GM12878 (cell line): ENCODE measurements at regions of chr10 and their contacts with region 1.

Region 1: GRCh38 chr10:17599089-17599488 is 18.1 kb downstream of the HACD1 start:
- DNase-seq: no peak
- ATAC-seq: peak; percentile 71
- H3K4me3 ChIP-seq: no peak overlapping the region
- H3K27ac ChIP-seq: no peak overlapping the region
- H3K4me1 ChIP-seq: no peaks in the 10 kb centered on the region
- H3K27me3 ChIP-seq: no peaks in the 10 kb centered on the region
- CTCF ChIP-seq: peak; percentile 38 to 48 (median 38); a peak in 4 of 6 replicates
- EP300 ChIP-seq: no peak
- POLR2A ChIP-seq: no peak
- RAD21 ChIP-seq: peak; percentile 58

Region 2: DNA sequence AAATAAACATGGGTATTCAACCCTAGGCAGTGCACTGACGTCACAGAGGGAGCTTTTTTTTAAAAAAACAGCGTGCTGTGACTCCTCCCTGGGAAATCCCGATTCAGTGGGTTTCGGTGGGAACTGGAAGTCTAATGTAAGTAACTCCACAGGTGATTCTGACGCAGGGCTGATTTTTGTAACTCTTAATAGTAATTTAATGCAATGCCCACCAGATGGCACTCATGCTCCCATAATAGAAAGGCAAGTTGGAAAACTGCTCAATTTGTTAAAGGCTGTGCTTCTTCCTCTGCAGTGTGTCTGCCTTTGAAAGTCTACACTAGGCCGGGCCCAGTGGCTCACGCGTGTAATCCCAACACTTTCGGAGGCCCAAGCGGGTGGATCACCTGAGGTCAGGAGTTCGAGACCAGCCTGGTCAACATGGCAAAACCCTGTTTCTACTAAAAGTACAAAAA is 770.9 kb before region 1 on chr10:
- CTCF ChIA-PET with region 1: no interaction called
- POLR2A ChIA-PET with region 1: no interaction called
- RAD21 ChIA-PET with region 1: no interaction called
- SMC1A ChIA-PET with region 1: no interaction called
- in situ Hi-C with region 1: no loop called
- intact Hi-C with region 1: loop called (anchors 10 kb)
- DNase-seq: peak; percentile 48
- ATAC-seq: peak; percentile 90
- H3K4me3 ChIP-seq: no peak overlapping the region
- H3K27ac ChIP-seq: no peak overlapping the region
- H3K4me1 ChIP-seq: no peaks in the 10 kb centered on the region
- H3K27me3 ChIP-seq: no peaks in the 10 kb centered on the region
- CTCF ChIP-seq: peak; percentile 50 to 60 (median 51); a peak in 5 of 6 replicates
- EP300 ChIP-seq: no peak
- POLR2A ChIP-seq: no peak
- RAD21 ChIP-seq: peak; percentile 67

Region 3: DNA sequence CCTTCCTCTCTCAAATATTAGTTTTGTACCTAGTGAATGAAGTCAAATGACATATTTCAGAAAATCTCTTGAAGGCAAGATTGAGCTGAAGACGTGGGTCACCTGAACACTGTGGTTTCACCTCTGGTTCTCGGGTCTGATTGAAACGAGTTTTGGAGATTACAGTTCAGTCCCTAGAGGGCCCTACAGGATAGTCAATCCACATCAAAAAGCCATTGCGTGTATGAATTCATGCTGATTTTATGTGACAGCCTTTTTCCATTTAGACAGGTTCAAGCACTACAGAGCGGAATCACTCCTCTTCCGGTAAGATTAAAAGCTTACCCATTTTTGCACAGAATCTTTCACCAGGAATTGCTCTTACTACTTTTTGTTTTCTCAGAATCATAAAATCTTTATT is 308.9 kb before region 1 on chr10:
- CTCF ChIA-PET with region 1: no interaction called
- POLR2A ChIA-PET with region 1: no interaction called
- RAD21 ChIA-PET with region 1: no interaction called
- SMC1A ChIA-PET with region 1: no interaction called
- in situ Hi-C with region 1: no loop called
- intact Hi-C with region 1: loop called (anchors 10 kb)
- DNase-seq: no peak
- ATAC-seq: peak; percentile 31; the same call in 1 of the 3 replicates
- H3K4me3 ChIP-seq: no peak overlapping the region
- H3K27ac ChIP-seq: no peak overlapping the region
- H3K4me1 ChIP-seq: no peaks in the 10 kb centered on the region
- H3K27me3 ChIP-seq: no peaks in the 10 kb centered on the region
- CTCF ChIP-seq: peak in 1 of 3 experiments; percentile 30; a peak in 2 of 6 replicates
- EP300 ChIP-seq: no peak
- POLR2A ChIP-seq: no peak
- RAD21 ChIP-seq: peak; percentile 35

Region 4: DNA sequence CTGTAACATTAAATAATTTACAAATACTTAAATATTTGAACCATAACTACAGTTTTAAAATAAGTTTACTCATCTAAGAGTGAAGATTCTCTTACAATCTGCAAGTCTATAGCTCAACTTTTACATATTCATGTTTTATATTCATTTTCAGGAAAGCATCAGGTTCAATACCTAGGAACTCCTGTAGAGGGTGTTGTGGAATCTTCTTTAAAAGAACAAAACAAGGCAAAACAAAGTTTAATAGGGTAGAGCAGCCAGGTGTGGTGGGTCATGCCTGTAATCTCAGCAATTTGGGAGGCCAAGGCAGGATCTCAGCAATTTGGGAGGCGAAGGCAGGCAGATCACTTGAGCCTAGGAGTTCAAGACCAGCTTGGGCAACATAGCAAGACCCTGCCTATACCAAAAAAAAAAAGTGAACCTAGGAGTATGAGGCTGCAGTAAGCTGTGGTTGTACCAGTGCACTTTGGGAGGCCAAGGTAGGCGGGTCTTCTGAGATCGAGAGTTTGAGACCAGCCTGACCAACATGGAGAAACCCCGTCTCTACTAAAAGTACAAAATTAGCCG is 189.8 kb before region 1 on chr10:
- CTCF ChIA-PET with region 1: interaction called, 56 read pairs
- POLR2A ChIA-PET with region 1: no interaction called
- RAD21 ChIA-PET with region 1: interaction called, 13 read pairs
- SMC1A ChIA-PET with region 1: interaction called, 8 read pairs
- in situ Hi-C with region 1: no loop called
- intact Hi-C with region 1: loop called (anchors 1 kb)
- DNase-seq: no peak
- ATAC-seq: peak; percentile 54; the same call in 2 of the 3 replicates
- H3K4me3 ChIP-seq: no peak overlapping the region
- H3K27ac ChIP-seq: no peak overlapping the region
- H3K4me1 ChIP-seq: no peaks in the 10 kb centered on the region
- H3K27me3 ChIP-seq: no peaks in the 10 kb centered on the region
- CTCF ChIP-seq: peak; percentile 40 to 50 (median 50)
- EP300 ChIP-seq: no peak
- POLR2A ChIP-seq: no peak
- RAD21 ChIP-seq: peak; percentile 47

Region 5: DNA sequence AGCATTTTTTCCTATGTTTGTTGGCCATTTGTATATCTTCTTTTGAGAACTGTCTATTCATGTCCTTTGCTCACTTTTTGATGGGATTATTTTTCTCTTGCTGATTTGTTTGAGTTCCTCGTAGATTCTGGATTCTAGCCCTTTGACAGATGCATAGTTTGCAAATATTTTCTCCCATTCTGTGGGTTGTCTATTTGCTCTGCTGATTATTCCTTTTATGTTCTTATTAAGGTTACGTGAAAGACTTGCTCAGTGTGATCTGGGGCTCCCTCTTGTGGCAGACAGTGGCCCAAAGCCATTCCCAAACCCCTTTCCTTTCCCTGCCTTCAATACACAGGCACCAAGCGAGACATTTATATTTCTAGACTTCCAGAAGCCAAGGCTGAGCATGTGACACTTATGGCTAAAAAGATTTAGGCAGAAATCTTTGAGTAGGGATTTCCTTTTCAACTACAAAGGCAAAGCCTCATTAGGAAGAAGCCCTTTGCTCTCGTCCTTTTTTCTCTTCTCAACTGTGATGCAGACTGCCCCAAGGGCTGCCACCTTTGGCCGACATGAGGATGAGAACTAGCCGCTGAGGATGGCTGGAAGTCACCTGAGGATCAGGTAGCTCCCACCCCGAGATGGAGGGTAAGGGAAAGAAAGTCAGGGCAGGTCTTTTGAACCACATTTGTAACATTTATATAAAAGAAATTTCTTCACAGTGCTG is 168.3 kb before region 1 on chr10:
- CTCF ChIA-PET with region 1: interaction called, 5 read pairs
- POLR2A ChIA-PET with region 1: no interaction called
- RAD21 ChIA-PET with region 1: no interaction called
- SMC1A ChIA-PET with region 1: interaction called, 3 read pairs
- in situ Hi-C with region 1: no loop called
- intact Hi-C with region 1: loop called (anchors 5 kb)
- DNase-seq: no peak
- ATAC-seq: peak; percentile 72
- H3K4me3 ChIP-seq: no peak overlapping the region
- H3K27ac ChIP-seq: no peak overlapping the region
- H3K4me1 ChIP-seq: peaks cover 12% of the 10 kb centered on the region; the same call in 1 of the 2 replicates
- H3K27me3 ChIP-seq: peaks cover 0 to 7% of the 10 kb centered on the region in 2 experiments; a peak in 1 of 4 replicates
- CTCF ChIP-seq: peak; percentile 74 to 84 (median 75)
- EP300 ChIP-seq: no peak
- POLR2A ChIP-seq: no peak
- RAD21 ChIP-seq: peak; percentile 64

Region 6: DNA sequence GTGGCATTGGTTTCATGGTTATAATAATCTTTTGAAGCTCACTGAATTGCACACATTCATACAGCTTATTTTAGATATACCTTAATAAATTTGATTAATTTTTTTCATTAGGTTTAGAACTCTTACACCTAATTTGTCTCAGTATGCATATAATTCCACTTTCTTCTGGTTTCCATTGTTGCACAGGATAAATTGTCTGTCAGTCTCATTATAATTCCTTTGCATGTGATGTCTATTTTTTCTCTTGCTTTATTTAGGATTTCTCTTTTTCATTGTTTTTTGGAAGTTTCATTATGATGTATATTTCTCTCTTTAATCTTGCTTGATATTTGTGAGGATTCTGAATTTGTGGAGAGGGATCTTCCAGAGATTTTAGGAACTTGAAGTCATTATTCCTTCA is 1144.8 kb after region 1 on chr10:
- CTCF ChIA-PET with region 1: no interaction called
- POLR2A ChIA-PET with region 1: no interaction called
- RAD21 ChIA-PET with region 1: no interaction called
- SMC1A ChIA-PET with region 1: no interaction called
- in situ Hi-C with region 1: no loop called
- intact Hi-C with region 1: no loop called
- DNase-seq: no peak
- ATAC-seq: no peak
- H3K4me3 ChIP-seq: no peak overlapping the region
- H3K27ac ChIP-seq: no peak overlapping the region
- H3K4me1 ChIP-seq: no peaks in the 10 kb centered on the region
- H3K27me3 ChIP-seq: no peaks in the 10 kb centered on the region
- CTCF ChIP-seq: no peak
- EP300 ChIP-seq: no peak
- POLR2A ChIP-seq: no peak
- RAD21 ChIP-seq: no peak